Activated CD8-positive, alpha-beta memory T cell treated with anti-CD3 and anti-CD28 coated beads, Interleukin-2, amount 10 ng/mL, durations not matched to agents 7 days and 5 days (primary cell): ENCODE measurements at regions of chr6 and their contacts with region 1.

Region 1: GRCh38 chr6:41735427-41736356 is at the start of gene TFEB:
- DNase-seq: peak; percentile 95
- ATAC-seq: peak; percentile 71
- H3K4me3 Mint-ChIP-seq: peak within 1 kb of the TSS; percentile 79
- H3K27ac Mint-ChIP-seq: peak within 1 kb of the TSS; percentile 67
- H3K4me1 Mint-ChIP-seq: peaks cover 31% of the 10 kb centered on the region
- H3K27me3 Mint-ChIP-seq: no peaks in the 10 kb centered on the region
- total RNA-seq, gene TFEB: 14.5 to 15.8 TPM

Region 2: DNA sequence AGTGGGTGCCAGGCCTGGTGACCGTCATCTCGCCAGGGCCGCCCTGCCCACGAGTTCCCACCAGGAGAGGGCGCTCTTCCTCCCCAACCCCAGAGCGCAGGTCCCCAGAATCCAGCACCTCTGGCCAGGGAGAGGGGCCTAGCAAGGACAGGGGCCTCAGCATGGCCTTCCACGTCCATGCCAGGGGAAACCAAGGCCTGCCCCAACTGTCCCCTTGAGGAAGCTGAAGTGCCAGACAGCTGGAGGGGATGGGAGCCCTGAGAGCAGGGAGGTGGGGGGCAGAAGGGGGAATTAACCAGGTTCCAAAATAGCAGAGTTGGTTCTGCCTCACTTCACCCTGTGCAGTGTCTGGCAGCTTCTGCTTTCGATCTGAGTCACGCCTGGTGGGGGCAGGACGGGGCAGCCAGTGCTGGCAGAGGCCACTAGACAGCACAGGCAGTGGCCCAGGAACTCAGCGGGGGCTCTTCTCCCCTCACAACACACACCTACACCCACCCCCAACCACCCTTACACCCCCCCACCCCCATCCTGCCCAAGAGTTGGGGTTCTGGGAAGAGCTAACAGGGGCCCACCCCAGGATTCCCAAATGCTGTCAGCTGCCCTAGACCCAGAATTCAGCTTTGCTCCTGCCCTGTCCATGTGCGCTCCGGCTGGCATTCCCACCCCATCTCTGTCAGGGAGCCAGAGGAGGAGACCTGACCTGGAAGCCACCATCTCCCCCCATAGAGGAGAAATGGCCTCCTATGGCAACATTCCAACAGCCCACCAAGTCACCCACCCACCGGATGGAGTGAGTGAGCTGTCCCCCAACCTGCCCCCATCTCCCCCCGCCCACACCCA is 29.5 kb before region 1 on chr6:
- CTCF ChIA-PET with region 1: interaction called, 27 read pairs
- DNase-seq: peak; percentile 85
- ATAC-seq: peak; percentile 92
- H3K4me3 Mint-ChIP-seq: no peak overlapping the region
- H3K27ac Mint-ChIP-seq: peak overlapping the region; percentile 67
- H3K4me1 Mint-ChIP-seq: peaks cover 33% of the 10 kb centered on the region
- H3K27me3 Mint-ChIP-seq: no peaks in the 10 kb centered on the region

Region 3: GRCh38 chr6:41713161-41713649 is 22.5 kb before region 1 on chr6:
- CTCF ChIA-PET with region 1: interaction called, 23 read pairs
- DNase-seq: no peak
- ATAC-seq: no peak
- H3K4me3 Mint-ChIP-seq: no peak overlapping the region
- H3K27ac Mint-ChIP-seq: peak overlapping the region; percentile 6
- H3K4me1 Mint-ChIP-seq: peaks cover 38% of the 10 kb centered on the region
- H3K27me3 Mint-ChIP-seq: no peaks in the 10 kb centered on the region

Region 4: DNA sequence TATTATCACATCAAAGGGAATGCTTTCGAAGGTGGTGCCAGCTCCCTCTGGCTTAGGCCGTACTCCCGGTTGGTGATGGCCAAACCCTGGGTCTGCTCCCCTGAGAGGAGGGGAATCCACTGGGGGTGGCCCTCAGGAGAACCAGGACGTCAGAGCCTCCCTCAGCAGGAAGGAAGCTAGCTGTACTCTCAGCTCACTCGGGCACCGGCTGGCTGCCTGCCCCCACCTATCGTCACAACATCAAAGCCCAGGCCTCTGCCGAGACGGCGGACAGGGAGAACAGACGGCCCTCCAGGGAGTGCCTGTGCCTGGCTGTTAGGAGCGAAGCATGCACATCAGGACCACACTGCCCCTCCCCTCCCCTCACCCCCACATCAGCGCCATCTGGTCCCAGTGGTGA is 20.7 kb after region 1 on chr6:
- CTCF ChIA-PET with region 1: no interaction called
- DNase-seq: no peak
- ATAC-seq: peak; percentile 27
- H3K4me3 Mint-ChIP-seq: no peak overlapping the region
- H3K27ac Mint-ChIP-seq: no peak overlapping the region
- H3K4me1 Mint-ChIP-seq: no peaks in the 10 kb centered on the region
- H3K27me3 Mint-ChIP-seq: peaks cover 14% of the 10 kb centered on the region

Region 5: DNA sequence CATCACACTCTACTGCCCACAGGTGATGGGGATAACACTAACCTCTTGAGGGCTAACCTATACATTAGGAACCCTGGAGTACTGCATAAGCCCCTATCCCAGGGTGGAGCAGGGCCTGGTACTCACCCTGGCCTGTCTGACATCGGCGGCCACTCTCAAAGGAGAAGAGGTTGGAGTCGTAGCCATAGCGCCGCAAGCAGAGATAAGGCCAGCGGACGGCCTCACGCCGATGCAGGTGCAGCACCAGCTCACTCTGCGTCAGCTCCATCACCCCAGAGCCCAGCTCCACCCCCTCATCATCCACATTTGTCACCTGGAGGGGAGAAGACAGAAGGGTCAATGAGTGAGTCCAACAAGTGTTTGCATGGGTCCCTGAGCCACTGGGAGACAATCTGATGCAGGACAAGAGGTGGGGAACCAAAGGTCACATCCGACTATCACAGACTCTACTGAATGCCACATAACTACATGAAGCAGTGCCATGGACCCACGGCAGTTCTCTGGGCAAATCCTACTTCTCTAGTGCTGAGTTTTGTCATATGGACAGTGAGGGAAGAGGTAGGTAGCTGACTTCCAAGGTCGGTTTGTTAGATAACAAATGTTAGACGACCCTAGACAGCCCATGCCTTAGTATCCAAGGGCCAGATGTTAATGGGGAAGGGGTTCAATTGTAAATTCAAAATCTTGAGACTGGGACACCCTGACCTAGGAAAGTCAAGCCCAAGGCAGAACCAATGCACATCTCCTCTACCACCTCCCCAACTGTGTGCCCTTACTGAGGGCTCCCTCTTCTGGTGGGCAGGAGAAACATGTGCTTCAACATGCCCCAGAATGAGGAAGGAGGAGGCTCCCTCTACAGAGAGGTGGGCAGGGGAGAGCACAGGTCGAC is 39.8 kb after region 1 on chr6:
- CTCF ChIA-PET with region 1: interaction called, 17 read pairs
- DNase-seq: peak; percentile 65
- ATAC-seq: peak; percentile 43
- H3K4me3 Mint-ChIP-seq: no peak overlapping the region
- H3K27ac Mint-ChIP-seq: no peak overlapping the region
- H3K4me1 Mint-ChIP-seq: peaks cover 6% of the 10 kb centered on the region
- H3K27me3 Mint-ChIP-seq: no peaks in the 10 kb centered on the region